Endothelial cell of umbilical vein (primary cell): ENCODE measurements at regions of chr20 and their contacts with region 1.

Region 1: GRCh38 chr20:19961293-19961692 is 55.9 kb upstream of the NAA20 start:
- DNase-seq: no peak
- H3K4me3 ChIP-seq: no peak overlapping the region
- H3K27ac ChIP-seq: no peak overlapping the region
- H3K4me1 ChIP-seq: no peaks in the 10 kb centered on the region
- H3K27me3 ChIP-seq: no peaks in the 10 kb centered on the region
- CTCF ChIP-seq: no peak
- POLR2A ChIP-seq: no peak

Region 2: DNA sequence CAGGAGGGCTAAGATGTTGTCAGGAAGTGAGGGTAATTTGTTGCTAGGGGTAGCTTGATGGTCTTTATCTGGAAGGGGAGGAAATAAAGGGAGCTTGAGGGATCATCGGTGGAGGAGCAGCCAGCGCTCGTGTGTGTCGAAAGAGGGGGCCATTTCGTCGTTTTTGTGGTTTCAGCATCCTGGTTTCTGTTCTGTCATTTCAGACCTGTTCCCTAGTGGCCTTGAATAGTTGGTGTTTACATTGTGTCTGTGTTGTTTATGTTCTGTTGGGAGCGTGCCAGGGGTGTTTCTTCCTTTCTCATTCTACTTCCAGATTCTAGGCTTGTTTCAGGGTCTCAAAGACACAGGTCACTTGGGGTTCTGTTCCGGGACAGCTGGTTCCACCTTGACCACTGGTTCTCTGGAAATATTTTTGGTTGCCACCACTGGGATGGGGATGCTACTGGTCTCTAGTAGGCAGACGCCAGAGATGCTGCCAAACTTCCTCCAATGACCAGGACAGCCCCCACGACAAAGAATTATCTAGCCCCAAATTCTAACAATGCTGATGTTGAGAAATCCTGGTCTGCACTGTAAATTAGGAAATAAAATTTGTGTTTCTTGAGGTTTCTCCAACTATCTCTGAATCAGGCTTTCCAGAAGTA is 58.0 kb before region 1 on chr20:
- CTCF ChIA-PET with region 1: no interaction called
- POLR2A ChIA-PET with region 1: no interaction called
- dilution Hi-C with region 1: no loop called
- intact Hi-C with region 1: no loop called
- DNase-seq: peak; percentile 51
- H3K4me3 ChIP-seq: no peak overlapping the region
- H3K27ac ChIP-seq: peak overlapping the region; percentile 3
- H3K4me1 ChIP-seq: peaks cover 18% of the 10 kb centered on the region
- H3K27me3 ChIP-seq: no peaks in the 10 kb centered on the region
- CTCF ChIP-seq: peak; percentile 14 to 23
- POLR2A ChIP-seq: no peak

Region 3: GRCh38 chr20:19974626-19975435 is 13.5 kb after region 1 on chr20:
- CTCF ChIA-PET with region 1: interaction called, 10 read pairs
- POLR2A ChIA-PET with region 1: no interaction called
- dilution Hi-C with region 1: no loop called
- intact Hi-C with region 1: no loop called
- DNase-seq: peak; percentile 85
- H3K4me3 ChIP-seq: peak overlapping the region in 1 of 3 experiments; percentile 2
- H3K27ac ChIP-seq: peak overlapping the region; percentile 72
- H3K4me1 ChIP-seq: peaks cover 46% of the 10 kb centered on the region
- H3K27me3 ChIP-seq: no peaks in the 10 kb centered on the region
- CTCF ChIP-seq: no peak
- POLR2A ChIP-seq: no peak